HCT116 (cell line): ENCODE measurements at regions of chr4 and their contacts with region 1.

Region 1: DNA sequence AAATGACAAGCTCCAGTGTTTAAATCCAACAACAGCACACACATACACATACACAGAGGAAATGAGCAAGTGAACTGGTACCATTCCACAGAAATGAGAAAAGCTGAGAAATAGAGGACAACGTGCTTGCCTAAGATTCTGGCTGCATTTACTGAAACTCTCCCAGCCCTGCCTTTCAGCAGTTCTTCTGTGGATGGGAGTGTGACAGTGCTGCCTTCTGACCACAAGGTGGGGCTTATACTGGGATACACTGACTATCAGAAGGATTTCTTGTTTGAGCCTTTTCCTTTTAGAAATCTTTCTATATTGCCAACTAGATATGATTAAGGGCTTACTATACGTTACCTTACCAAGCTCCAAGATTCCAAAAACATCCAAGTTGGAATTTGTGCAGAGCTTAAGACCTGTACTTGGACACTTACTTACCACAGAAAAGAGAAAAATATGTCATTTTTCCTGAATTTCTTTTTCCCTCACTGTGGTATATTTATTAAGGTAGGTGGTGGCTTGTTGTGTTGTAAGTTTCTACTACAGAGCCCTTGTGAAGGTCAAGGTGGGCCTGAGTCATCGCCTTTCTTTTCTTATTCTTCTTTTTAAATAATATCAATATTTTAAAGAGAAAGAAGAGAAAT is 10.7 kb upstream of the CXCL8 start:
- DNase-seq: peak; percentile 54
- ATAC-seq: peak; percentile 90
- H3K4me3 ChIP-seq: no peak overlapping the region
- H3K27ac ChIP-seq: no peak overlapping the region
- H3K4me1 ChIP-seq: peaks cover 10 to 16% of the 10 kb centered on the region in 2 experiments; a peak in 3 of 4 replicates
- H3K27me3 ChIP-seq: no peaks in the 10 kb centered on the region
- CTCF ChIP-seq: peak; percentile 71 to 88 (median 87); a peak in 5 of 6 replicates
- POLR2A ChIP-seq: no peak
- RAD21 ChIP-seq: peak; percentile 74

Region 2: GRCh38 chr4:73864365-73864764 is 134.7 kb after region 1 on chr4:
- CTCF ChIA-PET with region 1: interaction called, 19 read pairs
- POLR2A ChIA-PET with region 1: no interaction called
- RAD21 ChIA-PET with region 1: interaction called in 1 of 2 experiments, 4 read pairs
- intact Hi-C with region 1: loop called (anchors 1 kb)
- DNase-seq: no peak
- ATAC-seq: peak; percentile 37
- H3K4me3 ChIP-seq: no peak overlapping the region
- H3K27ac ChIP-seq: no peak overlapping the region
- H3K4me1 ChIP-seq: peaks cover 0 to 10% of the 10 kb centered on the region in 2 experiments; a peak in 2 of 4 replicates
- H3K27me3 ChIP-seq: no peaks in the 10 kb centered on the region
- CTCF ChIP-seq: peak; percentile 47 to 71 (median 70); a peak in 5 of 6 replicates
- POLR2A ChIP-seq: no peak
- RAD21 ChIP-seq: peak; percentile 66

Region 3: DNA sequence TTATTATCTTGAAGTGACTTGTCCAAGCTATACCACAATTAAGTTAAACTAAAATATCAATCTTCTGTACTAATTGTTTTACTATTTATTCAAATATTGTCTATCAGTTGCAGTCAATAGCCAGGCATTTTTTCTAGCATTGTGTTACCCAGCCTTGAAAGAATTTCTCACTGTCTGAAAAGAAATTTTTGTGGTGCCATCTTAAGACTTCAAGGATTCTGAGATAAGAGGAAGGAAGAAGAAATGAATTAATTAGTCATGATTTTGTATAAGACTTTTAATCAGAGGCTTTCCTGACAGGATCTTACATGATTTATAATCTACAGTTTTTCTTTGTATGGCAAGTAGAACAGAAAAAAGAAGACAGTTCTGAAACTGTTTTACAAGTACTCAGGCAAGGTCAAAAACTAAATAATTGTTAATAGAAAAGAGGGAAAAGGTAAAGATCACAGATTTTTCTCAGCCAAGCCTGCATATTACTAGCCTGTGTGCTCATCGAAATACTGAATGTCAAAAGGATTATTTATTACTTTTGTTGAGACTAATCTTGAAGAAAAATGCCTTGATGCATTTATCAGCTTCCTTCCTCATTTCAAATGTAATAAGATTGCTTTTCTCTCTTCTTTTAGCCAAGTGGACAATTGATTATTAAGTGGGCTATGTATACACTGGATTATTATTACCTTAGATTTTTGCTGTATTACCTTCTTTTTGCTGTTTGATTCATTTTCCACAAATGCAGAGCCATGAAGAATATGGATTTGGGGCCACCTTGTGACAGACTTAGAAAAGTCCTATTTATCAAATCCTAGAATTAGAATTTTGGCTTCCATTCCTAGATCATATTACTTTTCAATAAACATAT is 193.3 kb after region 1 on chr4:
- CTCF ChIA-PET with region 1: interaction called, 3 read pairs
- POLR2A ChIA-PET with region 1: no interaction called
- RAD21 ChIA-PET with region 1: no interaction called
- intact Hi-C with region 1: loop called (anchors 2 kb)
- DNase-seq: peak; percentile 15
- ATAC-seq: no peak
- H3K4me3 ChIP-seq: no peak overlapping the region
- H3K27ac ChIP-seq: no peak overlapping the region
- H3K4me1 ChIP-seq: no peaks in the 10 kb centered on the region
- H3K27me3 ChIP-seq: no peaks in the 10 kb centered on the region
- CTCF ChIP-seq: peak; percentile 21 to 56 (median 48); a peak in 4 of 6 replicates
- POLR2A ChIP-seq: no peak
- RAD21 ChIP-seq: peak; percentile 80

Region 4: GRCh38 chr4:74038161-74039064 is 308.8 kb after region 1 on chr4 and contains the start of gene CXCL3:
- CTCF ChIA-PET with region 1: no interaction called
- POLR2A ChIA-PET with region 1: no interaction called
- RAD21 ChIA-PET with region 1: no interaction called
- intact Hi-C with region 1: loop called (anchors 5 kb)
- DNase-seq: no peak
- ATAC-seq: peak; percentile 91
- H3K4me3 ChIP-seq: peak within 1 kb of the TSS; percentile 73 to 78
- H3K27ac ChIP-seq: peak within 1 kb of the TSS; percentile 44; the same call in 1 of the 2 replicates
- H3K4me1 ChIP-seq: peaks cover 0 to 12% of the 10 kb centered on the region in 2 experiments; a peak in 2 of 4 replicates
- H3K27me3 ChIP-seq: no peaks in the 10 kb centered on the region
- CTCF ChIP-seq: peak in 2 of 3 experiments; percentile 4 to 54; a peak in 2 of 6 replicates
- POLR2A ChIP-seq: no peak
- RAD21 ChIP-seq: no peak
- total RNA-seq, gene CXCL3: 1.9 TPM

Region 5: GRCh38 chr4:74098450-74098994 is 368.9 kb after region 1 on chr4:
- CTCF ChIA-PET with region 1: no interaction called
- POLR2A ChIA-PET with region 1: no interaction called
- RAD21 ChIA-PET with region 1: no interaction called
- intact Hi-C with region 1: loop called (anchors 5 kb)
- DNase-seq: no peak
- ATAC-seq: no peak
- H3K4me3 ChIP-seq: peak overlapping the region; percentile 59 to 75
- H3K27ac ChIP-seq: peak overlapping the region; percentile 39; the same call in 1 of the 2 replicates
- H3K4me1 ChIP-seq: peaks cover 2 to 23% of the 10 kb centered on the region in 2 experiments; a peak in 2 of 4 replicates
- H3K27me3 ChIP-seq: no peaks in the 10 kb centered on the region
- CTCF ChIP-seq: no peak; a peak in 1 of 6 replicates
- POLR2A ChIP-seq: no peak
- RAD21 ChIP-seq: no peak